Motor neuron (in vitro differentiated cells): ENCODE measurements at regions of chr3 and their contacts with region 1.

Region 1: DNA sequence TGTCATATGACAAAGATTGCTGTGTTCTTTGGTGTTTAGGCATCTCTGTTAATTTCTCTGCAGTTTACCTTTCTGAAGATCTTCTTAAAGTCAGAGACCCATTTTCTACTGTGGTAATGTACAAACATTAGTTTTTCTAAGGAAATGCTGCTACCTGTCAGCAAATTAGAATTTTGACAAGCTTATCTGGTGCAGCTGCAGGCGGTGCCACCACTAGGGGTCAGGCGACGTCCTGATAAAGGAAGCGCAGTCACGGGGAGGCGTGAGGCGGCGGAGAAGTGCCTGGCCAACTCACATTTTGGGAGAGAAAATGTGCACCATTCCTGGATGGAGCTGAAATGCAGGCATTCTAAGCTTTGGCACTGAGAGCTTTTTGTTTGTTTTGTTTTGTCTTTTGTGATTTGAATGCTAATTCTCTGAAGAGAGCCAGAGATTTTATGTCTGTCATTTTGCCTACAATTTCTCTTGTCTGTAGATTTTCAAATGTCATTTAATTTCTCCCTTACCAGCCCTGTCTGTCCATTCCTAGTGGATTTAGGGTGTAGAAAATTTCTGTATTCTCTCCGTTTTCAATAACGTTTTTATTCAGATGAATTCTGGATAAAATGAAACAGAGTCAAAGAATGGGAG is 24.9 kb upstream of the SIAH2 start:
- ATAC-seq: peak; percentile 68 to 95 (median 80)
- H3K4me3 ChIP-seq: no peak overlapping the region
- H3K27ac ChIP-seq: no peak overlapping the region
- H3K4me1 ChIP-seq: peaks cover 3 to 9% of the 10 kb centered on the region in 2 donors

Region 2: GRCh38 chr3:150870396-150870795 is 82.5 kb after region 1 on chr3:
- in situ Hi-C with region 1: loop called in 1 of 9 experiments (anchors 10 kb)
- ATAC-seq: peak in 1 of 8 experiments; percentile 47
- H3K4me3 ChIP-seq: no peak overlapping the region
- H3K27ac ChIP-seq: no peak overlapping the region
- H3K4me1 ChIP-seq: no peaks in the 10 kb centered on the region

Region 3: GRCh38 chr3:151146071-151146730 is 358.3 kb after region 1 on chr3:
- in situ Hi-C with region 1: loop called in 5 of 9 experiments (anchors 10 to 25 kb)
- ATAC-seq: peak; percentile 78 to 99 (median 96)
- H3K4me3 ChIP-seq: no peak overlapping the region
- H3K27ac ChIP-seq: no peak overlapping the region
- H3K4me1 ChIP-seq: peaks cover 8 to 19% of the 10 kb centered on the region in 2 donors

Region 4: GRCh38 chr3:151168269-151169094 is 380.6 kb after region 1 on chr3:
- in situ Hi-C with region 1: loop called in 2 of 9 experiments (anchors 25 kb)
- ATAC-seq: peak in 6 of 8 experiments; percentile 60 to 92 (median 86)
- H3K4me3 ChIP-seq: no peak overlapping the region
- H3K27ac ChIP-seq: no peak overlapping the region
- H3K4me1 ChIP-seq: peaks cover 5 to 12% of the 10 kb centered on the region in 2 donors